ENCODE measurements at regions of chr12 and their contacts with region 1.

Region 1: GRCh38 chr12:88006351-88006750 is 22.9 kb downstream of the C12orf50 start:
- DNase-seq: no peak
- CTCF ChIP-seq: no peak

Region 2: GRCh38 chr12:87967871-87968270 is 38.5 kb before region 1 on chr12:
- CTCF ChIA-PET with region 1: no interaction called
- POLR2A ChIA-PET with region 1: no interaction called
- DNase-seq: no peak
- CTCF ChIP-seq: no peak

Region 3: DNA sequence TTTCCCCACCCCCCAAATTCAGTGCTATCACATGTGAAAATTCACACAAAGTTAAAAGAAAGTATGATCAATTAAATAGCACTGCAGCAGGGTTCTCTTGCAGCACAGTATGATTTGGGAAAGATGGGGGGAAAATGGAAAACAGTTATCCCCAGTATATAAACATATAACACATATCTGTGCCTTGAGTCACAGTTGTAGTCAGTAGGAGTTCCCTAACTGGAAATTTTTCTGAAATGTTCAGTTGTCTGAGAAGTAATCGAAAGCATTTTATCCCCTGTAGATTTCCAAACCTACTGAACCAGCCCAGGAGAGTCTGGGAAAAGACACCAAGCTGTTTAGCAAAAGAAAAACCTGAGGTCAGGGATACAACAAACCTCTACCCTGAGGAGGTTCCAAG is 24.1 kb before region 1 on chr12:
- CTCF ChIA-PET with region 1: no interaction called
- POLR2A ChIA-PET with region 1: no interaction called
- DNase-seq: no peak
- CTCF ChIP-seq: no peak

Region 4: GRCh38 chr12:88035271-88035906 is 29.0 kb after region 1 on chr12:
- CTCF ChIA-PET with region 1: no interaction called
- POLR2A ChIA-PET with region 1: interaction called, 12 read pairs
- DNase-seq: peak; percentile 90
- CTCF ChIP-seq: peak; percentile 6

Region 5: DNA sequence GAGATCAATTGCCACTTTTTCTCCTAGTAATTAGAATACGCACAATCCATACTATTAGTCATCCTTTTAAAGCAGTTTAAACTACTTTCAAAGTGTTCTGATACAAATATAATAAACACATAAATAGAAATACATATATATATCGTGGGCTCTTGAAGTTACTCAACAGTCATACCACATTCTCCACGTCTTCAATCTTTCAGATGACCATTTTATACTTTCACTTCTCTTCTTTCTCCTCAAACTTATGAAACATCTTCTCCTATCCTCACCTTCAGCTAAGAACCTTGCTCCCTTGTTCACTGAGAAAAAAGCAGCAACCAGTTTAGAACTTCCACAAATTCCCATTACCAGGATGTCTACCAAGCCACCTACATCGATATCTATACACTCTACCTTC is 116.3 kb after region 1 on chr12:
- CTCF ChIA-PET with region 1: no interaction called
- POLR2A ChIA-PET with region 1: no interaction called
- DNase-seq: no peak
- CTCF ChIP-seq: no peak